Activated naive CD4-positive, alpha-beta T cell treated with anti-CD3 and anti-CD28 coated beads for 36 hours (primary cell): ENCODE measurements at regions of chr14 and their contacts with region 1.

Region 1: DNA sequence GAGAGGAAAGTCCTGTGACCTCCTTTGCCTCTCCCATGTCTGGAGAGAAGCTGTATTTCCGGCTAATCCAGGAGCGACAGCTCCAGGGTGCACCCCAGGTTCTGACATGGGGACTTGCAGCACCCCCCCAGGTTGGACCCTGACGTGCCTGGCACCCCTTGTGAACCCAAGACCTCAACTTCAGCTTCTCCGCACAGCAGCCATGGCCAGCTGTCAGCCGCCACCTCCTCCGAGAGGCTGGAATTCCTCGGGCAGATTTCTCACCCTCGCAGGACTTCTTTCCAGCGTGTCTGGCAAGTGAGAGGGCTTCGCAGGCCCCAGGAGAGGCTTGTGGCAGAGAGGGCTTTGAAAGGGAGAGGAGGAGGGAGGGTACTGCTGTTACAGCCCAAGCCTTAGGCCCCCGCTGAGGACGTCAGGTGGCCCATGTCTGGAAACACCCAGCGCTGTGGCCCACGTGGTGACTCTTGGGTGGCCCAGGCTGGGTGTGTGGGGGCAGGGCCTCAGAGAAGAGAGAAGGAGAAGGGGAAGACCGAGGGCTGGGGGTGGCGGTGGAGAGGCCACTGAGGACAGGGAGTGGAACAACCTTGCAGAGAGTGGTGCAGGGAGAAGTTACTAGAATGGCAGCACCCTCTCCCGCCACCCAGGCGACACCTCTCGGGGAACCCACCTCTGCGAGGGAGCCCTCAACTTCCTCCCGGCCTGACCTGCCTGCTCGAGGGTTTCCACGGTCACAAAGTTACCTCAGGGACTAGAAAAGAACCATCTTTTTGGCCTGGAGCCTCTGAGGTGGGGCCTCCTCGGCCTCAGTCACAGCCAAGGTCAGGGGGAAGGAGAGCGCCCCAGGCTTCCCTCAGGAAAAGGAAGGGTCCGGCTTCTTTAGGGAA is 11.7 kb upstream of the RPS6KL1 start:
- DNase-seq: no peak
- H3K4me3 Mint-ChIP-seq: no peak overlapping the region
- H3K27ac Mint-ChIP-seq: no peak overlapping the region
- H3K4me1 Mint-ChIP-seq: peaks cover 17% of the 10 kb centered on the region
- H3K27me3 Mint-ChIP-seq: no peaks in the 10 kb centered on the region

Region 2: GRCh38 chr14:74841230-74842207 is 93.2 kb before region 1 on chr14:
- CTCF ChIA-PET with region 1: no interaction called
- intact Hi-C with region 1: no loop called
- DNase-seq: peak; percentile 46
- H3K4me3 Mint-ChIP-seq: no peak overlapping the region
- H3K27ac Mint-ChIP-seq: peak overlapping the region; percentile 54
- H3K4me1 Mint-ChIP-seq: peaks cover 54% of the 10 kb centered on the region
- H3K27me3 Mint-ChIP-seq: no peaks in the 10 kb centered on the region

Region 3: GRCh38 chr14:74945823-74946682 is 11.3 kb after region 1 on chr14:
- CTCF ChIA-PET with region 1: interaction called, 22 read pairs
- intact Hi-C with region 1: no loop called
- DNase-seq: peak; percentile 87
- H3K4me3 Mint-ChIP-seq: peak overlapping the region; percentile 50
- H3K27ac Mint-ChIP-seq: peak overlapping the region; percentile 62
- H3K4me1 Mint-ChIP-seq: peaks cover 26% of the 10 kb centered on the region
- H3K27me3 Mint-ChIP-seq: peaks cover under 1% of the 10 kb centered on the region